Sigmoid colon (tissue), 7 donors: ENCODE measurements at regions of chr12 and their contacts with region 1.

Region 1: DNA sequence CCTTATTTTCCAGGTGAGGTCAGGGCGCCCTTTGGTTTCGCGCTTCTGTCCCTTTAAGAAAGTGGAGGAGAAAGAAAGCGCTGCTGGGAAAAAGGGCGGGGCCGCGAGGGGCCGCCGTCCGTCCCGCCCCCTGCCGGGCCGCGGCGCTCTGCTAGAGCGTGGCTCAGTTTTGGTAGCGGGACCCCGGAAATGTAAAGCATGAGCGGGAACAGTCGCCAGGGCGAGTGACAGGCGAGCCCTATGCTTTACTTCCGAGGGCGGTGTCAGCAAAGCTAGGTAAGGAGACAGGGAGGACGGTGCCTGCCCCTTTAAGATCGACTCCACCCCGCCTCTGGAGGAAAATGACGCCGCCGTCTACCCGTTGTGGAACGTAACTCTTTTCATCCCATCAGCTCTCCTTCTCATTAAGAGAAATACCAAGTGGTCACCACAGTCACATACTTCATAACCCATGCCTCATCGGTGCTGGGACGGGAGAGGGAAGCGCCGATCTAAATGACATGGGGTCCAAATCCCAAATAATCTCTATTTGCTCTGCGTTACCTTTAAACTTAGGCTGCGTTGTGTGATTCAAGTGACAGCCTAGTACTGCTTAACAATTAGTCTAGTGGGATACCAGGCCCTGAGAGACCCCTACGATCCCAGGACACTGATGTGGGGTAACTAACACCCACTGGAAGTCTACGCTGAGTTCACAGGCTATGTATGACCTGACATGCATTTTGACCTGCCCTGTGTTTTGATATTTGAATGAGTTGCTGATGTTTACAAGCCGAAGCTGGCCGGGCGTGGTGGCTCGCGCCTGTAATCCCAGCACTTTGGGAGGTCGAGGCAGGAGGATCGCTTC is at the start of gene ETFBKMT:
- DNase-seq: peak; percentile 94
- H3K4me3 ChIP-seq: peak within 1 kb of the TSS; percentile 61 to 75 (median 70)
- H3K27ac ChIP-seq: peak within 1 kb of the TSS; percentile 91 to 96 (median 94)
- H3K4me1 ChIP-seq: peaks cover 0 to 6% (median 4%) of the 10 kb centered on the region in 4 donors
- H3K27me3 ChIP-seq: no peaks in the 10 kb centered on the region
- CTCF ChIP-seq: peak in 2 of 4 experiments; percentile 28 to 63
- EP300 ChIP-seq: no peak
- POLR2A ChIP-seq: no peak
- total RNA-seq, gene ETFBKMT: 2.5 to 4.4 (median 3.0) TPM

Region 2: DNA sequence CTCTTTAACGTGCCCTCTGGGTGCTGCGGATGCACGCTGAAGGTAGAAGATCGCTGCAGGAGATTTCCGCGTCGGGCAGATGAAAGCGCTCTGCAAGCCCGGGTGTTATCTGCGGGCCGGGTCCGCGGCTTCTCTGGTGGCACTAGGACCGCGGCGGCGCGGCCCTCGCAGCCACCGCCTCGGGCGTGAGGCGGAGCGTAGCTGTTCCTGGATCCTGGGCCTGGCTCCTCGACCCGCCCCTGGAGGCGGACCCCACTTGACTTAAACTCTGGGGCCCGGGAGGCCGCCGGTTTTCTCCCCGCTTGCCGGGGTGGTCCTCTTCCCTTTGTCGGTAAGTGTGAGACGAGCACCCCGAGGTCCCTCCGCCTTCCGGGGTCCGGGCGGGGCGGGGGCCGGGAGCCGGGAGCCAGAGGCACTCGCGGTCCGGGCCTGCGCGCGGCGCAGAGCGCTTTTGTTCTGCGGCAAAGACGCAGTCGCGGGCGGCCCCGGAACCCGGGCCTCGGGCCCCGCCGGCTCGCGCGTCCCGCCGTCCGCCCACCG is 299.9 kb after region 1 on chr12 and contains the start of gene RESF1:
- intact Hi-C with region 1: loop called (anchors 2 kb)
- DNase-seq: peak; percentile 91
- H3K4me3 ChIP-seq: peak within 1 kb of the TSS; percentile 67 to 79 (median 72)
- H3K27ac ChIP-seq: peak within 1 kb of the TSS; percentile 92 to 97 (median 94)
- H3K4me1 ChIP-seq: peaks cover 0 to 36% (median 24%) of the 10 kb centered on the region in 4 donors
- H3K27me3 ChIP-seq: no peaks in the 10 kb centered on the region
- CTCF ChIP-seq: no peak
- EP300 ChIP-seq: no peak
- POLR2A ChIP-seq: peak; percentile 40 to 62
- total RNA-seq, gene RESF1: 33.5 to 49.4 (median 41.2) TPM